CD4-positive, alpha-beta memory T cell (primary cell): ENCODE measurements at regions of chr20 and their contacts with region 1.

Region 1: DNA sequence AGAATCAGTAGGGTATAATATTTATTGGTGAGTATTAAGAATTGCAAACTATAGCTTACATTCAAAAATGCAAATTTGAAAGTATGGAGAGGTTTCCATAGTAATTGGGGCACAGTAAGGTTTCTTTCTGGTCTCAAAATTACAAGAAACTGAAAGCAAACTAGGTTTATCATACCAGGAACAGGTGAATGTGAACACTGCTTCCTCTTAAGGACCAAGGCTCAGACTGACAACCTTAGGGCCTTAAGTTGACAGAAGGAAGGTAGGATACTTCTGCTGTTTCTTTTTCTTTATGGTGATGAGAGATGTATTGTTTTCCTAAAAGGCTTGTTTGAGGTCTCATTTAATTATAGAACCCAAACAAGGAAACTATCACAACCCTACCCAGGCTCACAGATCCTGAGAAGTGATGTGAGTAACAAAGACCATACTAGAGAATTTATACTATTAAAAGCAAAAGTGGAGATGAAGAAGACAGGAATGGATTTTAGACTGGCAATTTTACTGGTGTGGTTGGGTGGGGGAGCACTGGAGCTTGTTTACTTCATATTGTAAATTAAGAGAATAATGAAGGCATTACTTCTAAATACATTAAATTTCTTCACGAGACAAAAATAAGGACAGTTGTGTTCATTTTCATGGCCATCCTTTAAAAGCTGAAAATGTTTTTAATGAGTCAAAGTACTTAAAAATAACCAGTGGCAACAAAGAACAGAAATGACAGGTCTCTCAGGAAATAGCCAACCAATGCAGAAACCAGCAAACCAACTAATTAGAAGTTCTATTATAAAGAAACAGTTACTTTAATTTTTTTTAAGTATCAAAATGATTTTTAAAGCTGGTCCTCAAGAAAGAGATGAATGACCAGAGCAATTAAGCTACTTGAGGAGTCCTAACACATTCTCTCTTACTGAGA is 21.3 kb downstream of the STAU1 start:
- DNase-seq: no peak
- H3K4me3 ChIP-seq: no peak overlapping the region
- H3K4me3 Mint-ChIP-seq: peak overlapping the region in 7 of 8 donors; percentile 1 to 60 (median 27)
- H3K27ac ChIP-seq: no peak overlapping the region
- H3K27ac Mint-ChIP-seq: peak overlapping the region; percentile 17 to 88 (median 61)
- H3K4me1 ChIP-seq: peaks cover 56% of the 10 kb centered on the region
- H3K4me1 Mint-ChIP-seq: peaks cover 37 to 67% (median 53%) of the 10 kb centered on the region in 4 donors
- H3K27me3 ChIP-seq: no peaks in the 10 kb centered on the region
- H3K27me3 Mint-ChIP-seq: no peaks in the 10 kb centered on the region

Region 2: DNA sequence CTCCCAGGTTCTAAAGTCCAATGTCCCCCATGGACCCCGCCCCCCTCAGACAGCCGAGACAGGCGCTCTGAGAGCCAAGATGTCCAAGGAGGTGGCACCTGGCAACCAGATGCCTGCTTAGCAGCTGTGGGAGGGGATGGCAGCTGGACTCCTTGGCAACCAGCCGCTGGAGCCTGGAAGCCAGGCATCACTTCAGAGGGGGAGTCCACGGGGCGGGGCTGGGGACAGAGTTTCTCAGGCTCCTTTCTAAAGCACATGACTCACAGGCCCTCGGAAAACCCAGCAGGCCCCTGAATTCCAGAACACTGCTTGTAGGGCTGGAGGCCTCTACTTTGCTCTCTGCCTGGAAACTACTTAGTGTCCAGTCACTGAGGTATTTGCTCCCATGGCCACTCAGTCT is 390.5 kb before region 1 on chr20:
- CTCF ChIA-PET with region 1: no interaction called
- POLR2A ChIA-PET with region 1: no interaction called
- intact Hi-C with region 1: no loop called
- DNase-seq: no peak
- H3K4me3 ChIP-seq: no peak overlapping the region
- H3K4me3 Mint-ChIP-seq: peak overlapping the region in 1 of 8 donors; percentile 8
- H3K27ac ChIP-seq: peak overlapping the region; percentile 33
- H3K27ac Mint-ChIP-seq: peak overlapping the region in 6 of 7 donors; percentile 17 to 83 (median 81)
- H3K4me1 ChIP-seq: peaks cover 83% of the 10 kb centered on the region
- H3K4me1 Mint-ChIP-seq: peaks cover 55 to 63% (median 62%) of the 10 kb centered on the region in 4 donors
- H3K27me3 ChIP-seq: no peaks in the 10 kb centered on the region
- H3K27me3 Mint-ChIP-seq: no peaks in the 10 kb centered on the region

Region 3: GRCh38 chr20:49132995-49133478 is 33.8 kb before region 1 on chr20:
- CTCF ChIA-PET with region 1: interaction called, 13 read pairs
- POLR2A ChIA-PET with region 1: no interaction called
- intact Hi-C with region 1: no loop called
- DNase-seq: peak in 4 of 5 donors; percentile 58 to 61 (median 60)
- H3K4me3 ChIP-seq: no peak overlapping the region
- H3K4me3 Mint-ChIP-seq: no peak overlapping the region
- H3K27ac ChIP-seq: no peak overlapping the region
- H3K27ac Mint-ChIP-seq: peak overlapping the region in 6 of 7 donors; percentile 1 to 71 (median 38)
- H3K4me1 ChIP-seq: no peaks in the 10 kb centered on the region
- H3K4me1 Mint-ChIP-seq: peaks cover 5 to 15% (median 8%) of the 10 kb centered on the region in 4 donors
- H3K27me3 ChIP-seq: no peaks in the 10 kb centered on the region
- H3K27me3 Mint-ChIP-seq: no peaks in the 10 kb centered on the region

Region 4: GRCh38 chr20:49179368-49180277 is 12.8 kb after region 1 on chr20:
- CTCF ChIA-PET with region 1: interaction called, 12 read pairs
- POLR2A ChIA-PET with region 1: no interaction called
- intact Hi-C with region 1: no loop called
- DNase-seq: no peak
- H3K4me3 ChIP-seq: no peak overlapping the region
- H3K4me3 Mint-ChIP-seq: peak overlapping the region in 5 of 8 donors; percentile 14 to 62 (median 26)
- H3K27ac ChIP-seq: no peak overlapping the region
- H3K27ac Mint-ChIP-seq: peak overlapping the region in 5 of 7 donors; percentile 43 to 89 (median 49)
- H3K4me1 ChIP-seq: peaks cover 60% of the 10 kb centered on the region
- H3K4me1 Mint-ChIP-seq: peaks cover 36 to 64% (median 51%) of the 10 kb centered on the region in 4 donors
- H3K27me3 ChIP-seq: no peaks in the 10 kb centered on the region
- H3K27me3 Mint-ChIP-seq: no peaks in the 10 kb centered on the region